Sigmoid colon (tissue), 7 donors: ENCODE measurements at regions of chr7 and their contacts with region 1.

Region 1: GRCh38 chr7:107150375-107151073 is 18.3 kb upstream of the HBP1 start:
- DNase-seq: peak; percentile 86
- H3K4me3 ChIP-seq: no peak overlapping the region
- H3K27ac ChIP-seq: no peak overlapping the region
- H3K4me1 ChIP-seq: no peaks in the 10 kb centered on the region
- H3K27me3 ChIP-seq: no peaks in the 10 kb centered on the region
- CTCF ChIP-seq: peak in 3 of 4 experiments; percentile 28 to 57 (median 50)
- EP300 ChIP-seq: no peak
- POLR2A ChIP-seq: no peak

Region 2: GRCh38 chr7:106947244-106947728 is 203.2 kb before region 1 on chr7:
- intact Hi-C with region 1: loop called (anchors 5 kb)
- DNase-seq: no peak
- H3K4me3 ChIP-seq: no peak overlapping the region
- H3K27ac ChIP-seq: no peak overlapping the region
- H3K4me1 ChIP-seq: peaks cover 0 to 7% (median 0%) of the 10 kb centered on the region in 4 donors
- H3K27me3 ChIP-seq: no peaks in the 10 kb centered on the region
- CTCF ChIP-seq: peak in 3 of 4 experiments; percentile 35 to 57 (median 55)
- EP300 ChIP-seq: no peak
- POLR2A ChIP-seq: no peak

Region 3: DNA sequence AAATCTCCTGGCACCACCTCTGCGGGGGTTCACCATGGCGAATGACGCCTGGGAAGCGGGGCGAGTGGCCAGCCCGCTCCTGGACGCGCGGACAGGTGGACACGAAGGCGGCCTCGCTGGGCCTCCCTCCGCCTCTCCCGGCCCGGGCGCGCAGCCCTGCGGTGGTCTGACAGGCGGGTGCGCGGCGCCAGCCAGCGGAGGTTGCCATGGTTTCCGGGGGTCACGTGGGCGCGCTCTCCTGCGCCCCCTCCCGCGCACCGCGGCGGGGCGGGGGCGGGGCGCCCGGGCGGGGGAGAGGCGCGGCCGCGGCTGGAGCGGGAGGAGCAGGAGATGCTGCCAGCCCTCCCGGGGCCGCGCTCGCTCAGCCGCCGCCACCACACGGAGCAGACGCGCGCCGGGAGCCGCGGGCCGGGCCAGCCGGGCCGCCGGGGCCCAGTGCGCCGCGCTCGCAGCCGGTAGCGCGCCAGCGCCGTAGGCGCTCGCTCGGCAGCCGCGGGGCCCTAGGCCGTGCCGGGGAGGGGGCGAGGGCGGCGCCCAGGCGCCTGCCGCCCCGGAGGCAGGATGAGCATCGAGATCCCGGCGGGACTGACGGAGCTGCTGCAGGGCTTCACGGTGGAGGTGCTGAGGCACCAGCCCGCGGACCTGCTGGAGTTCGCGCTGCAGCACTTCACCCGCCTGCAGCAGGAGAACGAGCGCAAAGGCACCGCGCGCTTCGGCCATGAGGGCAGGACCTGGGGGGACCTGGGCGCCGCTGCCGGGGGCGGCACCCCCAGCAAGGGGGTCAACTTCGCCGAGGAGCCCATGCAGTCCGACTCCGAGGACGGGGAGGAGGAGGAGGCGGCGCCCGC is 106.0 kb before region 1 on chr7 and contains the start of gene PRKAR2B:
- intact Hi-C with region 1: loop called (anchors 10 kb)
- DNase-seq: peak; percentile 89
- H3K4me3 ChIP-seq: peak within 1 kb of the TSS; percentile 66 to 90 (median 77)
- H3K27ac ChIP-seq: peak within 1 kb of the TSS; percentile 76 to 89 (median 83)
- H3K4me1 ChIP-seq: peaks cover 0 to 21% (median 14%) of the 10 kb centered on the region in 4 donors
- H3K27me3 ChIP-seq: no peaks in the 10 kb centered on the region
- CTCF ChIP-seq: no peak
- EP300 ChIP-seq: no peak
- POLR2A ChIP-seq: no peak
- total RNA-seq, gene PRKAR2B: 20.2 to 40.0 (median 31.2) TPM

Region 4: GRCh38 chr7:107168233-107169119 is 18.0 kb after region 1 on chr7 and contains the start of gene HBP1:
- intact Hi-C with region 1: no loop called
- DNase-seq: peak; percentile 100
- H3K4me3 ChIP-seq: peak within 1 kb of the TSS; percentile 89 to 99 (median 95)
- H3K27ac ChIP-seq: peak within 1 kb of the TSS; percentile 94 to 100 (median 96)
- H3K4me1 ChIP-seq: peaks cover 0 to 40% (median 28%) of the 10 kb centered on the region in 4 donors
- H3K27me3 ChIP-seq: no peaks in the 10 kb centered on the region
- CTCF ChIP-seq: no peak
- EP300 ChIP-seq: no peak
- POLR2A ChIP-seq: peak; percentile 49 to 64
- total RNA-seq, gene HBP1: 104 to 172 (median 119) TPM